CD8-positive, alpha-beta T cell (primary cell): ENCODE measurements at regions of chr2 and their contacts with region 1.

Region 1: GRCh38 chr2:119366649-119367471 is at the starts of genes C2orf76 and DBI:
- DNase-seq: peak; percentile 81 to 97 (median 90)
- ATAC-seq: peak; percentile 91
- H3K4me3 ChIP-seq: peak within 1 kb of the TSS; percentile 66 to 96
- H3K4me3 Mint-ChIP-seq: peak within 1 kb of the TSS; percentile 97
- H3K27ac ChIP-seq: peak within 1 kb of the TSS; percentile 68 to 92
- H3K27ac Mint-ChIP-seq: peak within 1 kb of the TSS; percentile 96
- H3K4me1 ChIP-seq: peaks cover 19% of the 10 kb centered on the region
- H3K4me1 Mint-ChIP-seq: peaks cover 61% of the 10 kb centered on the region
- H3K27me3 ChIP-seq: no peaks in the 10 kb centered on the region
- H3K27me3 Mint-ChIP-seq: no peaks in the 10 kb centered on the region
- CTCF ChIP-seq: no peak
- total RNA-seq, gene C2orf76: 5.2 to 5.8 TPM
- total RNA-seq, gene DBI: 33.9 to 35.6 TPM

Region 2: GRCh38 chr2:118013724-118014491 is 1353.0 kb before region 1 on chr2 and contains the start of gene CCDC93:
- CTCF ChIA-PET with region 1: no interaction called
- POLR2A ChIA-PET with region 1: no interaction called
- intact Hi-C with region 1: loop called (anchors 1 to 5 kb)
- DNase-seq: peak; percentile 73 to 94 (median 86)
- ATAC-seq: peak; percentile 85
- H3K4me3 ChIP-seq: peak within 1 kb of the TSS; percentile 73 to 88
- H3K4me3 Mint-ChIP-seq: peak within 1 kb of the TSS; percentile 95
- H3K27ac ChIP-seq: peak within 1 kb of the TSS; percentile 93 to 95
- H3K27ac Mint-ChIP-seq: peak within 1 kb of the TSS; percentile 92
- H3K4me1 ChIP-seq: peaks cover 27% of the 10 kb centered on the region
- H3K4me1 Mint-ChIP-seq: peaks cover 47% of the 10 kb centered on the region
- H3K27me3 ChIP-seq: no peaks in the 10 kb centered on the region
- H3K27me3 Mint-ChIP-seq: peaks cover 3% of the 10 kb centered on the region
- CTCF ChIP-seq: no peak
- total RNA-seq, gene CCDC93: 84.4 to 85.3 TPM

Region 3: DNA sequence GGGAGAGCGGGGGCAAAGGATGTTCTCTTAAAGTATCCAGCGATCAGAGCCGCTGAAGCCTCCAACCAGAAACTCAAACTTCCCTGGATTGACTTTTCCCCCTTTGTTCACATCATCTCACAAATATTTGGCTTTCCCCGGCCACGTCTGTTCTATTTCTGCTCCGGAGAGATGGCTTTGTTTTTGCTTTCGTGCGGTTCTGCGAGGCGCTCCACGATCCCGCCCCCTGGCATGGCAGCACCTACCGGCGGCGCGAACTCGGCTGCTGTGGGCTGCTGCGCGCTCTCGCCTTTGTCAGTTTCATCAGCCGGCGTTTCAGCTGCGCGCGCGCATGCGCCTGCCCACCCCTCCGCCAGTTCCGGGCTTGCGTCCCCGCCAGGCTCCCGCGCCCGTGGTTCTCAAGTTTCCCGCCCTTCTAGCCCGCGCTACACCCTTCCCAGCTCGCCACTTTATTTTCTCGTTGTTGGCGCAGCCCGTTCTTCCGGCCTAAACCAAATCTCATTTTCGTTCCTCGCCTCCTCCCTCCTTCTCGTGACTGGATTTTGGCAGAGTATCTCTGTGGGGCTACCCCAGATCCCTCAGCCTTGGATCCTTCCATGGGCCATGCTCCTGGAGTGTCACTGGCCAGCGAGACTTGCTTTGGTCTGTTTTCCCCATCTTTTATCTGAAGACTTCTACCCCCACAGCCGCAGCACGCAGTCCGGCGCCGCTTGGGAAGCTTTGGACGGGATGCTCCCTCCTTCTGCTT is 1180.6 kb before region 1 on chr2:
- CTCF ChIA-PET with region 1: no interaction called
- POLR2A ChIA-PET with region 1: no interaction called
- intact Hi-C with region 1: loop called (anchors 1 to 5 kb)
- DNase-seq: peak; percentile 66 to 94 (median 88)
- ATAC-seq: peak; percentile 92
- H3K4me3 ChIP-seq: peak overlapping the region; percentile 81 to 93
- H3K4me3 Mint-ChIP-seq: peak overlapping the region; percentile 94
- H3K27ac ChIP-seq: peak overlapping the region; percentile 73 to 79
- H3K27ac Mint-ChIP-seq: peak overlapping the region; percentile 94
- H3K4me1 ChIP-seq: peaks cover 9% of the 10 kb centered on the region
- H3K4me1 Mint-ChIP-seq: peaks cover 17% of the 10 kb centered on the region
- H3K27me3 ChIP-seq: no peaks in the 10 kb centered on the region
- H3K27me3 Mint-ChIP-seq: no peaks in the 10 kb centered on the region
- CTCF ChIP-seq: no peak

Region 4: GRCh38 chr2:119290859-119291587 is 75.8 kb before region 1 on chr2:
- CTCF ChIA-PET with region 1: no interaction called
- POLR2A ChIA-PET with region 1: no interaction called
- intact Hi-C with region 1: no loop called
- DNase-seq: peak in 7 of 9 experiments; percentile 53 to 81 (median 63)
- ATAC-seq: no peak
- H3K4me3 ChIP-seq: no peak overlapping the region
- H3K4me3 Mint-ChIP-seq: no peak overlapping the region
- H3K27ac ChIP-seq: no peak overlapping the region
- H3K27ac Mint-ChIP-seq: no peak overlapping the region
- H3K4me1 ChIP-seq: no peaks in the 10 kb centered on the region
- H3K4me1 Mint-ChIP-seq: no peaks in the 10 kb centered on the region
- H3K27me3 ChIP-seq: no peaks in the 10 kb centered on the region
- H3K27me3 Mint-ChIP-seq: no peaks in the 10 kb centered on the region
- CTCF ChIP-seq: no peak

Region 5: GRCh38 chr2:119338826-119339561 is 27.9 kb before region 1 on chr2:
- CTCF ChIA-PET with region 1: no interaction called
- POLR2A ChIA-PET with region 1: interaction called, 7 read pairs
- intact Hi-C with region 1: loop called (anchors 2 kb)
- DNase-seq: peak; percentile 24 to 81 (median 61)
- ATAC-seq: peak; percentile 100
- H3K4me3 ChIP-seq: no peak overlapping the region
- H3K4me3 Mint-ChIP-seq: peak overlapping the region; percentile 33
- H3K27ac ChIP-seq: peak overlapping the region; percentile 0 to 55
- H3K27ac Mint-ChIP-seq: peak overlapping the region; percentile 37
- H3K4me1 ChIP-seq: peaks cover 18% of the 10 kb centered on the region
- H3K4me1 Mint-ChIP-seq: peaks cover 20% of the 10 kb centered on the region
- H3K27me3 ChIP-seq: no peaks in the 10 kb centered on the region
- H3K27me3 Mint-ChIP-seq: no peaks in the 10 kb centered on the region
- CTCF ChIP-seq: no peak

Region 6: GRCh38 chr2:119771331-119771730 is 404.5 kb after region 1 on chr2:
- CTCF ChIA-PET with region 1: no interaction called
- POLR2A ChIA-PET with region 1: no interaction called
- intact Hi-C with region 1: no loop called
- DNase-seq: no peak
- ATAC-seq: no peak
- H3K4me3 ChIP-seq: no peak overlapping the region
- H3K4me3 Mint-ChIP-seq: no peak overlapping the region
- H3K27ac ChIP-seq: no peak overlapping the region
- H3K27ac Mint-ChIP-seq: peak overlapping the region; percentile 45
- H3K4me1 ChIP-seq: peaks cover 41% of the 10 kb centered on the region
- H3K4me1 Mint-ChIP-seq: peaks cover 41% of the 10 kb centered on the region
- H3K27me3 ChIP-seq: no peaks in the 10 kb centered on the region
- H3K27me3 Mint-ChIP-seq: no peaks in the 10 kb centered on the region
- CTCF ChIP-seq: no peak

Region 7: GRCh38 chr2:120012771-120013596 is 646.1 kb after region 1 on chr2 and contains the start of gene EPB41L5:
- CTCF ChIA-PET with region 1: no interaction called
- POLR2A ChIA-PET with region 1: no interaction called
- intact Hi-C with region 1: loop called in 1 of 2 experiments (anchors 10 kb)
- DNase-seq: peak; percentile 50 to 88 (median 80)
- ATAC-seq: peak; percentile 92
- H3K4me3 ChIP-seq: peak within 1 kb of the TSS; percentile 68 to 82
- H3K4me3 Mint-ChIP-seq: peak within 1 kb of the TSS; percentile 85
- H3K27ac ChIP-seq: peak within 1 kb of the TSS; percentile 32 to 44
- H3K27ac Mint-ChIP-seq: peak within 1 kb of the TSS; percentile 62
- H3K4me1 ChIP-seq: peaks cover 18% of the 10 kb centered on the region
- H3K4me1 Mint-ChIP-seq: peaks cover 26% of the 10 kb centered on the region
- H3K27me3 ChIP-seq: no peaks in the 10 kb centered on the region
- H3K27me3 Mint-ChIP-seq: no peaks in the 10 kb centered on the region
- CTCF ChIP-seq: no peak
- total RNA-seq, gene EPB41L5: 5.1 to 5.8 TPM

Region 8: GRCh38 chr2:120252225-120253021 is 885.6 kb after region 1 on chr2 and contains the start of gene RALB:
- CTCF ChIA-PET with region 1: no interaction called
- POLR2A ChIA-PET with region 1: no interaction called
- intact Hi-C with region 1: loop called in 1 of 2 experiments (anchors 5 kb)
- DNase-seq: peak; percentile 96 to 99 (median 98)
- ATAC-seq: peak; percentile 95
- H3K4me3 ChIP-seq: peak within 1 kb of the TSS; percentile 87 to 100
- H3K4me3 Mint-ChIP-seq: peak within 1 kb of the TSS; percentile 99
- H3K27ac ChIP-seq: peak within 1 kb of the TSS; percentile 63 to 85
- H3K27ac Mint-ChIP-seq: peak within 1 kb of the TSS; percentile 94
- H3K4me1 ChIP-seq: peaks cover 18% of the 10 kb centered on the region
- H3K4me1 Mint-ChIP-seq: peaks cover 34% of the 10 kb centered on the region
- H3K27me3 ChIP-seq: no peaks in the 10 kb centered on the region
- H3K27me3 Mint-ChIP-seq: peaks cover 5% of the 10 kb centered on the region
- CTCF ChIP-seq: no peak
- total RNA-seq, gene RALB: 3.1 to 3.2 TPM